Spleen (tissue), 13 donors: ENCODE measurements at regions of chr7 and their contacts with region 1.

Region 1: DNA sequence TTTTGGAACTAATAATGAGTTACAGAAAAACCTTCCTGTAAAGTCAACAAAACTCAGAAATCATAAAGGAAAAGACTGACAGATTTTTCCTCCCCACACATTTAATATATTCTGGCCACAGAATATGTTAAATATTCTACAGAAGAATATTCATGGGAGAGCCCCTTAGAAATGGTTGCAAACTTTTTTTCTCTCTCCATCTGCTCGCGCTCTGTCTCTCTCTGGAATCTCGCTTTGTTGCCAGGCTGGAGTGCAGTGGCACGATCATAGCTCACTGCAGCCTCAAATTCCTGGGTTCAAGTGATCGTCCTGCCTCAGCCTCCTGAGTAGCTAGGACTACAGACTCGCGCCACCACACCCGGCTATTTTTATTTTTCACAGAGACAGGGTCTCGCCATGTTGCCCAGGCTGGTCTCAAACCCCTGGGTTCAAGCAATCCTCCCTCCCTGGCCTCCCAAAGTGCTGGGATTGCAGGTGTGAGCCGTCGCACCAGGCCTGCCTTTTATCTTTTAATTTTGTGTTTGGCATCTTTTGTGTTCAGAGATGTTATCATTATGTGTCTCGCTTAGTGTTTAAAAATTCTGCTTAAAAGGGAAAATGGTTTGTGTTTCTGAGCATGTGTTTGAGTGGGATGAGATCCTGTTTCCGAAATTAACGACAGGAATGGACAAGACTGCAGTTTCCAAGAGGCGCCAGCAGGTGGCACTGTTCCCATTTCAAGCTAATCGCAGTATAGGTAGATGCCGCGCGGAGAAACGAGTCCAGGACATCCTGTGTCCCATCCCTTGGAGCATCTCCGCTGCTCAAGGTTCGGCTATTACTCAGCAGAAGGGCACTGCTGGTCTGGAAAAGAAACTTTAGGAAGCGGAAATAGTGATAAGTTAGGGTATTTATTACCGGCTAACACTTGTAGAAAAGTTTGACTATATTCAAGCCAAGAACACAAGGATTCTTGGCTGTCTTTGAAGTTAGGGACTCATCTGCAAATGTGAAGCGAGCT is 23.1 kb upstream of the ST7 start:
- DNase-seq: peak; percentile 93
- H3K4me3 ChIP-seq: no peak overlapping the region
- H3K27ac ChIP-seq: no peak overlapping the region
- H3K4me1 ChIP-seq: peaks cover 0 to 8% (median 6%) of the 10 kb centered on the region in 6 donors
- H3K27me3 ChIP-seq: no peaks in the 10 kb centered on the region
- CTCF ChIP-seq: peak; percentile 82 to 94 (median 91)
- POLR2A ChIP-seq: no peak

Region 2: DNA sequence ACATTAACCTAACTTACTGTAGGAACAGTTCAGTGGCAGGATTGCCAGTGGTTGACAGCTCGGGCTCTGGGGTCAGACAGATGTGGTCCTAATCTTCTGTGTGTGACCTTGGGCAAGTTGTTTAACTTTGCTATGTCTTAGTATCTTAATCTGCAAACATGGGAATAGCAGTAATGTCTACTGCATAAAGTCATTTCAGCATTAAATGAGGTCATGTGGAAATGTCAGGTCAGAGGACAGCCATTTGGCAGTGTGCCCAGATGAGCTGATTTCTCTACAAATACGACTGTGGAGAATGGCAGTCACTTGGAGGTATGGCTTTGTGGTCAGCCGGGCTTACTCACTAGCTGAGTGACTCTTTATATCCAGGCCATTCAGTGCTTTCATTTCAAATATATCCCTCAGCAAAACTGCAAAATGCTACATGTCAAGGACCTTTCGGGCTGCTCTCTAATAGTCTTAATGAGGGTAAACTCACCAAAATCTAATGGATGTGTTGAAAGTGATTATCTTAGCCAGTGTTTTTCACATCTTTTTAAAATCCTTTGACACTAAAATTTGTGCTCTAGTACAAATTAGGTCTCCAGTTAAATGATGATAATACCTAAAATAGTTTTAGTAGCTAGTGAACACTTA is 194.5 kb after region 1 on chr7:
- intact Hi-C with region 1: loop called (anchors 5 kb)
- DNase-seq: no peak
- H3K4me3 ChIP-seq: no peak overlapping the region
- H3K27ac ChIP-seq: peak overlapping the region in 4 of 8 donors; percentile 9 to 20 (median 16)
- H3K4me1 ChIP-seq: peaks cover 0 to 13% (median 11%) of the 10 kb centered on the region in 6 donors
- H3K27me3 ChIP-seq: no peaks in the 10 kb centered on the region
- CTCF ChIP-seq: no peak
- POLR2A ChIP-seq: no peak